Endothelial cell of umbilical vein (primary cell): ENCODE measurements at regions of chr3 and their contacts with region 1.

Region 1: GRCh38 chr3:112013058-112013783 is 14.5 kb downstream of the TAGLN3 start:
- DNase-seq: peak; percentile 70
- H3K4me3 ChIP-seq: no peak overlapping the region
- H3K27ac ChIP-seq: no peak overlapping the region
- H3K4me1 ChIP-seq: no peaks in the 10 kb centered on the region
- H3K27me3 ChIP-seq: no peaks in the 10 kb centered on the region
- CTCF ChIP-seq: peak; percentile 64 to 69
- POLR2A ChIP-seq: no peak

Region 2: DNA sequence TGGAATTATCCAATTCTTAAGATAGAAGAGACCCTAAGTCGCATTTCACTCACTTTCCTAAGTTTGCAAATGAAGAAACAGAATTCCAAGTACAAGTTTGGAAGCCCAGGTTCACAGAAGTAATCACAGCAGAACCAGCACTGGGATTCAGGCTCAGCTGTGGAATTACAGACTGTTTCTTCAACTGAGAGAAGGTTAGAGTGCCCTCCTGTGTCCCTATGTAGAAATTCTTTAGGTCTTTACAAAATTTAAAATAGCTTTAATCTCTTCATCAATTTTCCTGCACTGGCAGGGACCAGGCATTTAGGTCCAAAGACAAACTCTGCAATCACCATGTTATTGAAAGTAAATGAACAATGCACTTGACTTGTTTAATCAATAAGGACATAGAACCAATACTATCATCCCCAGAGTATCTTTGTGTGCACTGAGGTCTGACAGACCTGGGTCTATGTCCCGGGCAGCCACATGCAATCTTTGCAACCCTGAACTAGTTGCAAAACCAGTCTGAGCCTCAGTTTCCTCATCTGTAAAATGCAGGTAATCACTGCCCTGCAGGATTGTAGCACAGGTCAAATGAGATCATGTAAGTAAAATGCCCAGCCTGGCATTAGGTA is 321.8 kb before region 1 on chr3:
- CTCF ChIA-PET with region 1: interaction called, 17 read pairs
- POLR2A ChIA-PET with region 1: no interaction called
- dilution Hi-C with region 1: no loop called
- intact Hi-C with region 1: no loop called
- DNase-seq: peak; percentile 53
- H3K4me3 ChIP-seq: no peak overlapping the region
- H3K27ac ChIP-seq: no peak overlapping the region
- H3K4me1 ChIP-seq: peaks cover 12% of the 10 kb centered on the region
- H3K27me3 ChIP-seq: no peaks in the 10 kb centered on the region
- CTCF ChIP-seq: peak; percentile 17 to 40
- POLR2A ChIP-seq: no peak

Region 3: GRCh38 chr3:111978493-111979433 is 34.5 kb before region 1 on chr3 and contains the start of gene ABHD10:
- CTCF ChIA-PET with region 1: interaction called, 32 read pairs
- POLR2A ChIA-PET with region 1: no interaction called
- dilution Hi-C with region 1: no loop called
- intact Hi-C with region 1: no loop called
- DNase-seq: peak; percentile 99
- H3K4me3 ChIP-seq: peak within 1 kb of the TSS; percentile 80 to 96 (median 96)
- H3K27ac ChIP-seq: peak within 1 kb of the TSS; percentile 33
- H3K4me1 ChIP-seq: peaks cover 21% of the 10 kb centered on the region
- H3K27me3 ChIP-seq: no peaks in the 10 kb centered on the region
- CTCF ChIP-seq: no peak
- POLR2A ChIP-seq: peak; percentile 90
- total RNA-seq, gene ABHD10: 26.2 and 37.0 TPM in 2 replicates

Region 4: DNA sequence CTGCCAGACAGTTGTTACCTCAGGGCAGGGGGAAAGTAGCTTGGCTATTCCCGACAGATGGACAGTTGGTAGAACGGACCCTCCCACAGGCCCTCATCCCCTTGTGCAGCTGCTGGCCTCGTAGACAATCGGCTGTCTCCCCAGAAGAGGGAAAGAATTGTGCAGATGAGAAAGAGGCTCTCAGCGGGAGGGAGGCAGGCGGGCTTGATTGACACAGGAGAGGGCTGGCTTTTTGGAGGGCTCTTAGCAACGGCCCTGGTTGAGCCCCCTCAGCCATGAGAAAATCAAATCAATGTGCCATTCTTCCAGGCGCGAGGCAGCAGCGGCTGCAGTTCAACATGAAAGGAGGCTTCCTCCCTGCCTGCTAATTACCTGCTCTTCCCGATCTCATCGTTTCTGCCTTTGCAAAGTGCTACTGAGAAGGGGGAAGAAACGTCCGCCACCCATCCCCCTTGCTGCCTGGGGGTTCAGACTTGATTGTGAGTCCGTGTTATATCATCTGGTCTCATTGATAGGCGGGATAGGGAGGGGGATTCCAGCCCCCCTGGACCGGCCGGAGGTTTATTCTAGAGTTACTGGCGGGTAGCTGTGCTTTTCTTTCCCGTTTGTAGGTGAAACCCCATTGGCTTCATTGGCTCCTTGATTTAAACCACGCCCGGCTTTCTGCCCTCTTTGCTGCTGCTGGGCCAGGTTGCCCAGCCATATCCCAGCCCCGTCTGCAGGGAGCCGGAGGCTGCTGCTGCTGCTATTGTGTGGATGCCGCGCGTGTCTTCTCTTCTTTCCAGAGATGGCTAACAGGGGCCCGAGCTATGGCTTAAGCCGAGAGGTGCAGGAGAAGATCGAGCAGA is 14.4 kb before region 1 on chr3 and contains the start of gene TAGLN3:
- CTCF ChIA-PET with region 1: interaction called, 291 read pairs
- POLR2A ChIA-PET with region 1: no interaction called
- dilution Hi-C with region 1: no loop called
- intact Hi-C with region 1: no loop called
- DNase-seq: peak; percentile 20
- H3K4me3 ChIP-seq: peak within 1 kb of the TSS; percentile 11 to 68 (median 34)
- H3K27ac ChIP-seq: no peak within 1 kb of the TSS
- H3K4me1 ChIP-seq: peaks cover 10% of the 10 kb centered on the region
- H3K27me3 ChIP-seq: no peaks in the 10 kb centered on the region
- CTCF ChIP-seq: no peak
- POLR2A ChIP-seq: no peak
- total RNA-seq, gene TAGLN3: not detected in 2 replicates

Region 5: DNA sequence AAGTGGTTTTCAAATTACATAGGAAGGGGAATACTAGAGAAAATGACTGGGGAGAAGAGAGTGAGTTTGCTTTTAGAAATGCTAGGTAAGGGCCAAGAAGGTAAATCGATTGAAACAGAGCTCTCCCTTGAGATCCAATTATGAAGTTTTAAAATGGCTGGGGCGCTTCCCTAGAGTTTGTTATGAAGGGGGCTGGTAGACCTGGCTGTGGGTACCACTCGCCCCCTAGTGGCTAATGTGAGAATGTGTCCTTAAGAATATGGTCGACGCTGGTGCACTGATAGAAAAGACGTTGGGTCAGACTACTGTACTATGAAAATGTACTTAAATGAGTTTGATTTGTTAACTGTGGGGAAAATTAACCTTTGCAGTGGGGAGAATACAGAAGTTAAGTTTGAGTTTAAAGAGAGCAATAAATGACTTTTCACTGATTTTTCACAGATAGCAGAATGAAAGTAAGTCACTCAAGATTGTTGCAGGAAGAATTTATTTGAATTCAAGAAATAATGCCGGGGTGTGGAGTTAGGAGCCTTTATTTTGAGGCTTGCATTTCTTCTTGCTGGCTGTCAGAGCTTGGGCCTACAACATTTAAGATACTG is 30.5 kb after region 1 on chr3:
- CTCF ChIA-PET with region 1: interaction called, 15 read pairs
- POLR2A ChIA-PET with region 1: no interaction called
- dilution Hi-C with region 1: no loop called
- intact Hi-C with region 1: no loop called
- DNase-seq: peak; percentile 71
- H3K4me3 ChIP-seq: no peak overlapping the region
- H3K27ac ChIP-seq: no peak overlapping the region
- H3K4me1 ChIP-seq: no peaks in the 10 kb centered on the region
- H3K27me3 ChIP-seq: no peaks in the 10 kb centered on the region
- CTCF ChIP-seq: peak; percentile 80 to 85
- POLR2A ChIP-seq: no peak